ENCODE measurements at regions of chr15 and their contacts with region 1.

Region 1: DNA sequence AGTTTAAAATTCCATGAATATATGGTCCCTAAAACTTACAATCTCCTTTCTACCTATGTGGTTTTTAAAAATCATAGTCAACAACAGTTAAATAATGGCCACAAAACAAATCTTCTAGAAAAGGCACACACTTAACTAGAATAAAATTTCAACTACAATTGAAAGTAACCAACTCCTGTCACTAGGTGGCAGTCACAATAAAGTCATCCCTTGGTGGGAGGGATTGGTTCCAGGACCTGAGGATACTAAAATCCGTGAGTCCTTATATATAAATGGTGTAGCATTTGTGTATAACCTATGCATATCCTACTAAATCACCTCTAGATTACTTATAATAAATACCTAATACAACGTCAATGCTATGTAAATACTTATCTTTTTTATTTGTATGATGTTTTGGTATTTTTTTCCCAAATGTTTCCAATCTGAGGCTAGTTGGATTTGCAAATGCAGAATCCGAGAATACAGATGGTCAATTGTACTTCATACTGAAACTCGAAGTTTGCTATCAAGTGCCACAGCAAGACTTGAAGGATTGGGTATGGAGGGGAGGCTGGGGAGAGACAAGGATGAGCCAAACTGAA is 172.6 kb downstream of the FMN1 start:
- DNase-seq: peak; percentile 67 to 79
- ATAC-seq: peak; percentile 76 to 90; a peak in 4 of 6 replicates
- H3K4me3 ChIP-seq: no peak overlapping the region
- H3K27ac ChIP-seq: no peak overlapping the region
- H3K4me1 ChIP-seq: 0 out of 3 replicates have a peak, but pooled peaks cover 7% of the 10 kb centered on the region
- CTCF ChIP-seq: peak; percentile 89
- EP300 ChIP-seq: no peak
- POLR2A ChIP-seq: no peak
- RAD21 ChIP-seq: peak; percentile 77 to 78

Region 2: DNA sequence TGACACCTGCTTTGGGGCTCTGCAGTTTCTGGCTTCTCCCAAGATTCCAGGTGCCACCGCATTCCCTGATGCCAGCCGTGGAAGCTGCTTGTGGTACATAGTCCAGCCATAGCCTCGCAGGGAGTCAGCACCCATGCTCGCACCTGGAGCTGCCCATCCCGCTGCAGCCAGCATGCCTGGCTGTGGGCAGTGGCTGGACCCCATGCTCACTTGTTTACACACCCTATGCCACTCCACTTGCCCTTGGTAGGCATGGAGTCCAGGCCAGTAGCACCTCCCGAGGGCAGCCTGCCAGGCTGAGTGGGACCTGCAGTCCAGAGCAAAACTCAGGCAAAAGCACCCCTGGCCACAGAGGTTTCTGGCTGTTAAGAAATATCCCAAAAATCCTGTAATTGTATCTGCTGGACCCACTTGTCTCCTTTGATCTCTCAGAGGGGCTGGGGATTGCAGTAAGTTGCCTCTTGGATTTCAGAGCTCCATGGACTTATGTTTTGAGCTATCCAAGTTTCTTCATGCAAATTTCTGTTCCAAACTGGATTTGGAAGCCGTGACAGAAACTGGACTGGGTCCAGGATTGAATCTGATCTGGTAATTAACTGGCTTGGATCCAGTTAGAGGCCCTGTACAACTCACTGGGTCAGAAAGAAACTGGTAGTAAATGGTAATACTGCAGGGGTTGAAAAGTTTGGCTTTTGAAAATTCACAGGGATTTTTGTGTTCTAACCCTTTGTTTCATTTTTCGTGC is 23.3 kb after region 1 on chr15:
- CTCF ChIA-PET with region 1: interaction called, 10 read pairs
- POLR2A ChIA-PET with region 1: no interaction called
- DNase-seq: no peak
- ATAC-seq: no peak
- H3K4me3 ChIP-seq: no peak overlapping the region
- H3K27ac ChIP-seq: no peak overlapping the region
- H3K4me1 ChIP-seq: no peaks in the 10 kb centered on the region
- CTCF ChIP-seq: no peak
- EP300 ChIP-seq: no peak
- POLR2A ChIP-seq: no peak
- RAD21 ChIP-seq: no peak